ENCODE measurements at regions of chr19 and their contacts with region 1.

Region 1: DNA sequence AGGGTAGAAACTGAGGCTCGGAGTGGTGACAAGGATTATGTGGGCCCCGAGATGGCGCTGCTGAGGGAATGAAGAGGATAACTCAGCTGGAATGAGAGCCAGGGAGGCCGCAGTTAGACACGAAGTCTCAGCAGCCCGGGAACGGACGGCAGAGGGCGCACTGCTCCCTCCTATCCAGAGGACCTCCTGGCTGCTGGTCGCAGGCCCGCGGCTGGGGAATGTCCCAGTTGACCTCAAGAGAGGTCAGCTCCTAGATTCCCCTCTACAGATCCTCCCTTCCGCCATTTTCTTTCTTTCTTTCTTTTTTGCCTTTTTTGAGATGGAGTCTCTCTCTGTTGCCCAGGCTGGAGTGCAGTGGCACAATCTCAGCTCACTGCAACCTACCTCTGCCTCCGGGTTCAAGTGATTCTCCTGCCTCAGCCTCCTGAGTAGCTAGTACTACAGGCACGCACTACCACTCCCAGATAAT is 24.1 kb upstream of the ASPDH start:
- ATAC-seq: peak in 7 of 8 experiments; percentile 48 to 97 (median 86)
- H3K4me3 ChIP-seq: no peak overlapping the region
- H3K27ac ChIP-seq: no peak overlapping the region
- H3K4me1 ChIP-seq: peaks cover 0 to 8% of the 10 kb centered on the region in 2 donors

Region 2: DNA sequence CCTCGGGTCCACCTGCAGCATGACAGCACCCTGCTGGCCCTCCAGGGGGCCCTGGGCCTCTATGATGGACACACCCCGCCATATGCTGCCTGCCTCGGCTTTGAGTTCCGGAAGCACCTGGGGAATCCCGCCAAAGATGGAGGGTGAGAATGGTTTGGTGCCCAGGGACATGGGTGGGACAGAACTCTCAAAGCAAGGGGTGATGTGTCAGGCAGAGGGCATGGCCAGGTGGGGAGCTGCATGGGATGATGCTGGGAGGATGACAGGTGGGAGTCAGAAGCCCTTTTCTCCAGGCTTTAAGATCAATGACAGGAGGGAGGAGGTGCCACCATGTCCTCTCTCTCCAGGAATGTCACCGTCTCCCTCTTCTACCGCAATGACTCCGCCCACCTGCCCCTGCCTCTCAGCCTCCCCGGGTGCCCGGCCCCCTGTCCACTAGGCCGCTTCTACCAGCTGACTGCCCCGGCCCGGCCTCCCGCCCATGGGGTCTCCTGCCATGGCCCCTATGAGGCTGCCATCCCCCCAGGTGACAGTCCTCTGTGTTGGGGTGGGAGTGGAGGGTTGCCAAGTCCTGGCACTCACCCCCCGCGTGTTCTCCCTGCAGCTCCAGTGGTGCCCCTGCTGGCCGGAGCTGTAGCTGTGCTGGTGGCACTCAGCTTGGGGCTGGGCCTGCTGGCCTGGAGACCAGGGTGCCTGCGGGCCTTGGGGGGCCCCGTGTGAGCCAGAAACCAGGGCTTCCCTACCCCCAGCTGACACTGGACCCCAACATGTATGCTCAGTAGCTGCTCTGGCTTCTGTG is 256.8 kb after region 1 on chr19:
- in situ Hi-C with region 1: loop called in 2 of 9 experiments (anchors 25 kb)
- ATAC-seq: peak in 4 of 8 experiments; percentile 11 to 40 (median 28)
- H3K4me3 ChIP-seq: no peak overlapping the region
- H3K27ac ChIP-seq: no peak overlapping the region
- H3K4me1 ChIP-seq: peaks cover 0 to 2% of the 10 kb centered on the region in 2 donors

Region 3: DNA sequence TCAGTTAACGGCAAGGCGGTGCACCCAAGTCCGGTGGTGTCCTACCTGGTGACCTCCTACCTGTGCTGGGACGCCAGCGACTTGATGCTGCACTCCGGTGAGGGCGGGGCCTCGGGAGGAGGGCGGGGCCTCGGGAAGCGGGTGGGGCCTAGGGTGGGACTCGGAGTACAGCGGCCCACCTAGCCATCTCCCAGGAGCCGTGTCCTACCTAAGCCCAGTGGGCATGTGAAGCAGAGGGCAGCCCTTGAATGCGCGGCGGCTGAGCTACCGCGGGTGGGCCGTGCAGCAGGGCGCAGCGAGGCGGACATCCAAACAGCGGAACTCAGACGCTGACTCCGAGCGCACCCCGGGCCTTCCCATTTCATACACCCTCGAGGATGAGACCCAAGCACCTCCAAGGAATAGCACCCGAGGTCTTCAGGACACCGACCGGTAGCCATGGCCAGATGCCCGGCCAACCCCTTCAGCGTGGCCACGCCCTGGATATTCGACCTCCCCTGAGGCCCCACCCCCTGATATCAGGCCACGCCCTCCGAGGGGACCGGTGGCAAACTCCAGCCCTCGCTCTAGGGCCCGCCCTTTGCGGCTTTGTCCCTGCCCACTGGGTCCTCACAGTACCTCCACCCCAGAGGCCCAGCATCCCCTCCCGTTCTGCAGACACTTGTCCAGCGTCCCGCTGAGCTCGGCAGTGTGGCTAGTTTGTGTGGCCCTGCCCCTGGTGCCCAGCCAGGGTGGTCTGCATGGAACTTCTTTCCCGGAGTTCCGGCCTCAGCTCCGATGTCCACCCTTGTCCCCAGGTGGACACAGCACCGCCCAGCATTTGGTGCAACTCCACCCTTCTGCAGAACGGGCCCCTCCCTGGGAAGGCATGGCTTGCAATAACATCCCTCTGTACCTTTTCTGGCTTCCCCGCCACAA is 280.4 kb after region 1 on chr19:
- in situ Hi-C with region 1: no loop called
- ATAC-seq: peak; percentile 68 to 93 (median 90)
- H3K4me3 ChIP-seq: peak overlapping the region; percentile 24 to 45 (median 39)
- H3K27ac ChIP-seq: no peak overlapping the region
- H3K4me1 ChIP-seq: peaks cover 0 to 15% of the 10 kb centered on the region in 2 donors

Measured in motor neuron (in vitro differentiated cells).